B cell (primary cell): ENCODE measurements at regions of chr5 and their contacts with region 1.

Region 1: DNA sequence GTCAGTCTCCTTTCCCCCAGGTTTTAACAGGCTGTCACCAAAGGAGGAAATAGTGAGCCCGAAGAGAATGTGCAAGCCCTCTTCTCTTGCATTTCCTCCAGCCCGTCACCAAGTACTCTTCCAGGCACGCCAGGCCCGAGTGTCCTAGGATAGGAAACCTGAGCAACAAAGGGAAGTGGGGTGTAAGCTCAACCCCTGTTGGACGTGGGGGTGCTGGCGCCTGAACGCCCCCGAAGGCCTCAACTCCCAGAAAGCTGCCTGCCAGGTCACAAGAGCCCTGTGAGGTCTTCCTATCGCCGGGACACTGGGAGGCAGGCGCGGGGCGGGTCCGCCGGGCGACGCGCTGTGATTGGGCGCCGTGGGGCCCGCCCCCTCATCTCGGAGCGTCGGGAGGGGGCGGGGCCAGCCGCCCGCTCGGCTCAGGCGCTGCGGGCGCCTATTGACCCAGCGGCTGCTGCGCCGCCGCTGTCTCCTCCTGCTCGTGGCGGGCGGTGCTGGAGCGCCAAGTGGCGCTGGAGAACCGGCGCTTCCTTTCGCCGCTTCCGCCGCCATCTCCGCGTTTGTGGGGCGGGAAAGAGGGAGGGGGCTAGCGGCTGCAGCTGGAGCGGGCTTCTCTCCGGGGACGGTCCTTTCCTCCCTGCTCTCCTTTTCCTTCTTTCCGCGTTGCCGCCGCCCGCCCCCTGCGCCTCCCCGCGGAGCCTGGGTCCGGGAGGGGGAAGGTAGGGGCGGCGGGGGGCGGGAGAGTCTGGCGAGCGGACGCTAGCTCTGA is 572 bp upstream of the MAN2A1 start:
- DNase-seq: peak; percentile 94
- ATAC-seq: peak; percentile 80
- H3K4me3 ChIP-seq: peak overlapping the region; percentile 16 to 92 (median 88)
- H3K4me3 Mint-ChIP-seq: peak overlapping the region; percentile 85
- H3K27ac ChIP-seq: peak overlapping the region; percentile 90 to 91
- H3K27ac Mint-ChIP-seq: peak overlapping the region; percentile 81
- H3K4me1 ChIP-seq: peaks cover 25 to 28% of the 10 kb centered on the region in 2 donors
- H3K4me1 Mint-ChIP-seq: peaks cover 33% of the 10 kb centered on the region
- H3K27me3 ChIP-seq: no peaks in the 10 kb centered on the region
- H3K27me3 Mint-ChIP-seq: peaks cover 5% of the 10 kb centered on the region
- CTCF ChIP-seq: no peak

Region 2: DNA sequence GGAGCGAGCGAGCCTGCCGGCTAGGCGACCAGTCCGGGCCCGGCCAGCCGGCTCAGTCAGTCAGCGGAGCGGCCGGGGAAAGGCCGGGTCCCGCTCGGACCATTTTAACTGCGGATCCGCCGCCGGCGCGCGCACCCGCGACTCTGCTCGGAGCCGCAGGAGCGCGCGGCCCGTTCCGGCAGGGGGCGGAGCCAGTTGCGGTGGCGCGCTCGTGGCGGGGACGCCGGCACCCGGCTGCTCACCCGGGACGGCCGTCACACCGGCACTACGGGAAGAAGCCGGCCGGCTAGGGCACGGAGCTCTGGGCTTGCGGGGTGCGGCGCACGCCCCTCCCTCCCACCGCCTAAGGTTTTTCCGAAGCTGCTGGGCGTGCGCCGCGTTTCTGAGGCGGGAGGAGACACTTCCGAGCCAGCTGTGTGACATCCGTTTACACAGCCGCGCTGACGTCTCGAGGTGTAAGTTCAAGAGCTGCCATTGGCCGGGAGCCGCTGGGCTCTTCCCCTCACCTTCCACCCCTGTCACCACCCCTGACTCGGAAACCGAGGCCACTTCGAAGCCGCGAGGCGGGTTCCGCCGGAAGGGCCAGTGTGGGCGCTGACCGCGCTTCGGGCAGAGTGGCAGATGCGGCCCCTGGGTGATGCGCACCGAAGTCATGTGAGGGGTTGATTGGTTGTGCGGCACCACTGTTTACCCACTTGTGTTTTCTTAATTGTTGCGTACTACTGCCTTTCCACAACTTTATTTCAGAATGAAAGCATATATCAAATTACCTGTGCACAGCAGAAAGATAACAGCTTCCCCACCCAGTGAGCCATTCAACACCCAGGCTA is 1307.0 kb before region 1 on chr5 and contains the start of gene FBXL17:
- CTCF ChIA-PET with region 1: no interaction called
- POLR2A ChIA-PET with region 1: interaction called, 4 read pairs
- intact Hi-C with region 1: loop called (anchors 1 kb)
- DNase-seq: peak; percentile 96
- ATAC-seq: peak; percentile 70
- H3K4me3 ChIP-seq: peak within 1 kb of the TSS; percentile 64 to 99 (median 87)
- H3K4me3 Mint-ChIP-seq: peak within 1 kb of the TSS; percentile 87
- H3K27ac ChIP-seq: peak within 1 kb of the TSS; percentile 91 to 97
- H3K27ac Mint-ChIP-seq: peak within 1 kb of the TSS; percentile 94
- H3K4me1 ChIP-seq: peaks cover 17 to 20% of the 10 kb centered on the region in 2 donors
- H3K4me1 Mint-ChIP-seq: peaks cover 35% of the 10 kb centered on the region
- H3K27me3 ChIP-seq: no peaks in the 10 kb centered on the region
- H3K27me3 Mint-ChIP-seq: no peaks in the 10 kb centered on the region
- CTCF ChIP-seq: no peak
- total RNA-seq, gene FBXL17: 38.1 and 40.3 TPM in 2 replicates

Region 3: GRCh38 chr5:109601736-109602135 is 87.4 kb before region 1 on chr5:
- CTCF ChIA-PET with region 1: no interaction called
- POLR2A ChIA-PET with region 1: no interaction called
- intact Hi-C with region 1: no loop called
- DNase-seq: no peak
- ATAC-seq: no peak
- H3K4me3 ChIP-seq: no peak overlapping the region
- H3K4me3 Mint-ChIP-seq: no peak overlapping the region
- H3K27ac ChIP-seq: no peak overlapping the region
- H3K27ac Mint-ChIP-seq: no peak overlapping the region
- H3K4me1 ChIP-seq: no peaks in the 10 kb centered on the region
- H3K4me1 Mint-ChIP-seq: no peaks in the 10 kb centered on the region
- H3K27me3 ChIP-seq: no peaks in the 10 kb centered on the region
- H3K27me3 Mint-ChIP-seq: peaks cover 30% of the 10 kb centered on the region
- CTCF ChIP-seq: no peak

Region 4: DNA sequence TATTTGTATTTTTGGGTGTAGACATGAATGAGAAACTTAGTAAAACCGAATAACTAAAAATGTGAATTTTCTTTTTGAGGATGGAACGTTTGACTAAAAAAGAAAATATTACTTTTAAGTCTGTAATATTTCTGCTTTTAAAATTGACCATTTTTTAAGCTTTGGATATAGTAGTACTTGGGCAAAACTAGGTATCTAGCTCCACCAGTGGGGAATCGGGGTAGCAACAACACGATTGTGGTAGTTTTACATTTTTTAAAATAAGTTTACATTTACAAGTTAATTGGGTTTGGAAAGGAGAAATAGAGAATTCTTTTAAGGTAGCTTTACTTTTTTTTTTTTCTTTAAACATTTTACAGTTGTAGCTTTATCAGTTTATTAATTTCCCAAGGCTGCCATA is 155.0 kb after region 1 on chr5:
- CTCF ChIA-PET with region 1: no interaction called
- POLR2A ChIA-PET with region 1: no interaction called
- intact Hi-C with region 1: loop called (anchors 5 kb)
- DNase-seq: no peak
- ATAC-seq: no peak
- H3K4me3 ChIP-seq: no peak overlapping the region
- H3K4me3 Mint-ChIP-seq: no peak overlapping the region
- H3K27ac ChIP-seq: no peak overlapping the region
- H3K27ac Mint-ChIP-seq: no peak overlapping the region
- H3K4me1 ChIP-seq: no peaks in the 10 kb centered on the region
- H3K4me1 Mint-ChIP-seq: no peaks in the 10 kb centered on the region
- H3K27me3 ChIP-seq: no peaks in the 10 kb centered on the region
- H3K27me3 Mint-ChIP-seq: no peaks in the 10 kb centered on the region
- CTCF ChIP-seq: peak; percentile 33

Region 5: GRCh38 chr5:110625376-110625999 is 936.3 kb after region 1 on chr5:
- CTCF ChIA-PET with region 1: interaction called, 3 read pairs
- POLR2A ChIA-PET with region 1: no interaction called
- intact Hi-C with region 1: loop called (anchors 2 kb)
- DNase-seq: peak; percentile 20
- ATAC-seq: no peak
- H3K4me3 ChIP-seq: no peak overlapping the region
- H3K4me3 Mint-ChIP-seq: no peak overlapping the region
- H3K27ac ChIP-seq: no peak overlapping the region
- H3K27ac Mint-ChIP-seq: no peak overlapping the region
- H3K4me1 ChIP-seq: no peaks in the 10 kb centered on the region
- H3K4me1 Mint-ChIP-seq: no peaks in the 10 kb centered on the region
- H3K27me3 ChIP-seq: no peaks in the 10 kb centered on the region
- H3K27me3 Mint-ChIP-seq: no peaks in the 10 kb centered on the region
- CTCF ChIP-seq: peak; percentile 83

Region 6: GRCh38 chr5:111092062-111092853 is 1403.1 kb after region 1 on chr5 and contains the start of gene WDR36:
- CTCF ChIA-PET with region 1: no interaction called
- POLR2A ChIA-PET with region 1: no interaction called
- intact Hi-C with region 1: loop called (anchors 2 kb)
- DNase-seq: peak; percentile 93
- ATAC-seq: peak; percentile 94
- H3K4me3 ChIP-seq: peak within 1 kb of the TSS; percentile 87 to 94 (median 91)
- H3K4me3 Mint-ChIP-seq: peak within 1 kb of the TSS; percentile 97
- H3K27ac ChIP-seq: peak within 1 kb of the TSS; percentile 70 to 73
- H3K27ac Mint-ChIP-seq: peak within 1 kb of the TSS; percentile 74
- H3K4me1 ChIP-seq: peaks cover 13 to 24% of the 10 kb centered on the region in 2 donors
- H3K4me1 Mint-ChIP-seq: peaks cover 25% of the 10 kb centered on the region
- H3K27me3 ChIP-seq: peaks cover 0 to 7% (median 3%) of the 10 kb centered on the region in 4 experiments
- H3K27me3 Mint-ChIP-seq: peaks cover 6% of the 10 kb centered on the region
- CTCF ChIP-seq: no peak
- total RNA-seq, gene WDR36: 33.9 and 35.2 TPM in 2 replicates